ENCODE measurements at regions of chr11 and their contacts with region 1.

Region 1: GRCh38 chr11:65471410-65471762 is 27.5 kb upstream of the MALAT1 start:
- DNase-seq: no peak
- H3K27ac ChIP-seq: peak overlapping the region; percentile 95
- CTCF ChIP-seq: no peak

Region 2: GRCh38 chr11:65251476-65251875 is 219.9 kb before region 1 on chr11:
- CTCF ChIA-PET with region 1: no interaction called
- POLR2A ChIA-PET with region 1: no interaction called
- DNase-seq: no peak
- H3K27ac ChIP-seq: no peak overlapping the region
- CTCF ChIP-seq: no peak

Region 3: GRCh38 chr11:65425105-65425970 is 46.0 kb before region 1 on chr11:
- CTCF ChIA-PET with region 1: no interaction called
- POLR2A ChIA-PET with region 1: no interaction called
- DNase-seq: no peak
- H3K27ac ChIP-seq: peak overlapping the region; percentile 100
- CTCF ChIP-seq: no peak

Region 4: GRCh38 chr11:65497141-65498041 is 26.0 kb after region 1 on chr11:
- CTCF ChIA-PET with region 1: interaction called, 3 read pairs
- POLR2A ChIA-PET with region 1: interaction called, 19 read pairs
- DNase-seq: peak; percentile 87
- H3K27ac ChIP-seq: peak overlapping the region; percentile 99
- CTCF ChIP-seq: no peak

Region 5: GRCh38 chr11:65685981-65686380 is 214.6 kb after region 1 on chr11:
- CTCF ChIA-PET with region 1: no interaction called
- POLR2A ChIA-PET with region 1: no interaction called
- DNase-seq: no peak
- H3K27ac ChIP-seq: no peak overlapping the region
- CTCF ChIP-seq: no peak

Measured in RWPE1 (cell line).